CD8-positive, alpha-beta T cell (primary cell): ENCODE measurements at regions of chr12 and their contacts with region 1.

Region 1: DNA sequence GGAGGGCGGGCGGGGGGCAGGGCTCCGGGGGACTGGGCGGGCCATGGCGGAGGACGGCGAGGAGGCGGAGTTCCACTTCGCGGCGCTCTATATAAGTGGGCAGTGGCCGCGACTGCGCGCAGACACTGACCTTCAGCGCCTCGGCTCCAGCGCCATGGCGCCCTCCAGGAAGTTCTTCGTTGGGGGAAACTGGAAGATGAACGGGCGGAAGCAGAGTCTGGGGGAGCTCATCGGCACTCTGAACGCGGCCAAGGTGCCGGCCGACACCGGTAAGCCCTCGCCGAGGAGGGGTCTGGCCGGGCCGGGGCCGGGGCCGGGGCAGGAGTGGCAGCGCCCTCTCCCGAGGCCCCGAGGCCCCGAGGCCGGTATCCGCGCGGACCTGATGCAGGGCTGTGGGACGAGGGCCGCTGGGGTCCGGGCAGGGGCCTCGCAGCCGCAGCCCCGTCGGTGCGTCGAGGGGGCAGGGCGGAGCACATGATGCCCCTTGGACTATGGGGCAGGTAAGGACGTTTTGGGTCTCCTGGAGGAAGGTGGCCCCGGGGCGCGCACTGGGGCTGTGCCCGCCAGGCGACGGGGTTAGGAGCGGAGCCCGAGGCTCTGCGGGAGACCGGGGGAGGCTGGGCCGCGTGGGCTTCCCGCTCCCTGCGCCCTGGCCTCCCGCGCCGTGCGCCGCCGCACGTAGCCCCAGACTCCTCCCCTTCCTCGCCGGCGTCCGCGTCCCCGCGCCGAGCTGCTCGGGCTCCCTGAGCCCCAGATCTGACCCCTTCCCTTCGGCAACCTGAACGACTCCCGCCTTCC is at the start of gene TPI1:
- DNase-seq: peak; percentile 48 to 86 (median 77)
- ATAC-seq: peak; percentile 70
- H3K4me3 ChIP-seq: peak within 1 kb of the TSS; percentile 54 to 64
- H3K4me3 Mint-ChIP-seq: peak within 1 kb of the TSS; percentile 89
- H3K27ac ChIP-seq: peak within 1 kb of the TSS; percentile 53 to 81
- H3K27ac Mint-ChIP-seq: peak within 1 kb of the TSS; percentile 85
- H3K4me1 ChIP-seq: peaks cover 49% of the 10 kb centered on the region
- H3K4me1 Mint-ChIP-seq: peaks cover 57% of the 10 kb centered on the region
- H3K27me3 ChIP-seq: no peaks in the 10 kb centered on the region
- H3K27me3 Mint-ChIP-seq: no peaks in the 10 kb centered on the region
- CTCF ChIP-seq: no peak
- total RNA-seq, gene TPI1: 59.6 to 64.0 TPM

Region 2: DNA sequence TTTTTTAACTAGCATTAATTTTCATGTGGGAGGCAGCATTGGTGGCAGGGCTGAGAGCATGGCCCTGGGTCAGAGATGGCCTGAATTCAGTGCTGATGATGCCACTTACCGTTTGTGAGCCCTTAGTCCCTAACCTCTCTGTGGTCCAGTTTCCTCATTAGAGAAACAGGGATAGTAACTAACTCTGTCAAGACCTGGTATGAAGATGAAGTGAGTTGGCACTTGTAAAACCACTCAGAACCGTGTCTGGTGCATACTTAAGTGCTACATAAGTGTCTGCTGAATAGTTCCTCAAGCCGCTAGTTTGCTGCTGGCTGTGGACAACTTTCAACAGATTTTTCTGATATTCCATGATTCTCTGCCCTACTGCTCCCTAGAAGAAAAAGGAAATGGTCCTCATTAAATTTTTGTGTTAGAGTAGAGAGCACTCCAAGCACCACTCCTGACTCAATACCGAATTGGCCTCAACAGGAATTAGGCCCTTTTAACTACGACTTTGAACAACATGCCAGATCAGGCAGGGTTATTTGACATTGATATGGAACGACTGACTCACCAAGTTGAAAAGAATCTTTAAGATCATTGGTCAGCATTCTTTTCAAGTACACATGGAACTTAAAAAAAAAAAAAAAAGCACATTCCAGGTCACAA is 1172.7 kb before region 1 on chr12:
- CTCF ChIA-PET with region 1: no interaction called
- POLR2A ChIA-PET with region 1: no interaction called
- intact Hi-C with region 1: no loop called
- DNase-seq: no peak
- ATAC-seq: no peak
- H3K4me3 ChIP-seq: no peak overlapping the region
- H3K4me3 Mint-ChIP-seq: no peak overlapping the region
- H3K27ac ChIP-seq: no peak overlapping the region
- H3K27ac Mint-ChIP-seq: no peak overlapping the region
- H3K4me1 ChIP-seq: no peaks in the 10 kb centered on the region
- H3K4me1 Mint-ChIP-seq: no peaks in the 10 kb centered on the region
- H3K27me3 ChIP-seq: peaks cover 0 to 2% of the 10 kb centered on the region in 2 experiments
- H3K27me3 Mint-ChIP-seq: peaks cover 2% of the 10 kb centered on the region
- CTCF ChIP-seq: no peak

Region 3: DNA sequence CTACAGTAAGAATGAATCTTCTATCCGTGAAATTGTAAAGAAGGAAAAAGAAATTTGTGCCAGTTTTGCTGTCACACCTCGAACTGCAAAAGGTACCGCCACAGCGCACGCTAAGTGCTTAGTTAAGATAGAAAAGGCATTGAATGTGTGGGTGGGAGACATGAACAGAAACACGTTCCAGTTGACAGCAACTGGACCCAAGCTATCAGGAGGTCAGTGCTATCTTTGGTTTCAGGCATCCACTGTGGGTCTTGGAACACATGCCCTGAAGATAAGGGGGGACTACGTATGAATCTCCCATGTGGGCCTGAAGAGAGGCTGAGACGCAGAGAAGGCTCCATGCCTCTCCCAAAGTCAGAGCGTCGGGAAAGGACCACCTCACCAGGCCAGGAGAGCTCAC is 321.6 kb before region 1 on chr12:
- CTCF ChIA-PET with region 1: no interaction called
- POLR2A ChIA-PET with region 1: no interaction called
- intact Hi-C with region 1: no loop called
- DNase-seq: no peak
- ATAC-seq: no peak
- H3K4me3 ChIP-seq: no peak overlapping the region
- H3K4me3 Mint-ChIP-seq: no peak overlapping the region
- H3K27ac ChIP-seq: no peak overlapping the region
- H3K27ac Mint-ChIP-seq: no peak overlapping the region
- H3K4me1 ChIP-seq: no peaks in the 10 kb centered on the region
- H3K4me1 Mint-ChIP-seq: peaks cover 10% of the 10 kb centered on the region
- H3K27me3 ChIP-seq: no peaks in the 10 kb centered on the region
- H3K27me3 Mint-ChIP-seq: no peaks in the 10 kb centered on the region
- CTCF ChIP-seq: no peak

Region 4: DNA sequence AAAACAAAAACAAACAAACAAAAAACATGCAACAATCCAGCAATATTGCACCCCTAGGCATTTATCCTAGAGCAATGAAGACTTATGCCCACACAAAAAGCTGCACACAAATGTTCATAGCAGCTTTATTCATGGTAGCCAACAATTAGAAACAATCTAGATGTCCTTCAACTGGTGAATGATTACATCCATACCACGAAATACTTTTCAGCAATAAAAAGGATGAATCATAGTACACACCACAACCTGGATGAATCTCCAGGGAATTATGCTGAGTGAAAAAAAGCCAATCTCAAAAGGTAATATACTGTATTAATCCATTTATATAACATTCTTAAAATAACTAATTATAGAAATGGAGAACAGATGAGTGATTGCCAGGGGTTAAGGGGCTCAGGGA is 60.4 kb before region 1 on chr12:
- CTCF ChIA-PET with region 1: no interaction called
- POLR2A ChIA-PET with region 1: no interaction called
- intact Hi-C with region 1: no loop called
- DNase-seq: no peak
- ATAC-seq: no peak
- H3K4me3 ChIP-seq: no peak overlapping the region
- H3K4me3 Mint-ChIP-seq: no peak overlapping the region
- H3K27ac ChIP-seq: no peak overlapping the region
- H3K27ac Mint-ChIP-seq: no peak overlapping the region
- H3K4me1 ChIP-seq: no peaks in the 10 kb centered on the region
- H3K4me1 Mint-ChIP-seq: no peaks in the 10 kb centered on the region
- H3K27me3 ChIP-seq: no peaks in the 10 kb centered on the region
- H3K27me3 Mint-ChIP-seq: no peaks in the 10 kb centered on the region
- CTCF ChIP-seq: no peak

Region 5: DNA sequence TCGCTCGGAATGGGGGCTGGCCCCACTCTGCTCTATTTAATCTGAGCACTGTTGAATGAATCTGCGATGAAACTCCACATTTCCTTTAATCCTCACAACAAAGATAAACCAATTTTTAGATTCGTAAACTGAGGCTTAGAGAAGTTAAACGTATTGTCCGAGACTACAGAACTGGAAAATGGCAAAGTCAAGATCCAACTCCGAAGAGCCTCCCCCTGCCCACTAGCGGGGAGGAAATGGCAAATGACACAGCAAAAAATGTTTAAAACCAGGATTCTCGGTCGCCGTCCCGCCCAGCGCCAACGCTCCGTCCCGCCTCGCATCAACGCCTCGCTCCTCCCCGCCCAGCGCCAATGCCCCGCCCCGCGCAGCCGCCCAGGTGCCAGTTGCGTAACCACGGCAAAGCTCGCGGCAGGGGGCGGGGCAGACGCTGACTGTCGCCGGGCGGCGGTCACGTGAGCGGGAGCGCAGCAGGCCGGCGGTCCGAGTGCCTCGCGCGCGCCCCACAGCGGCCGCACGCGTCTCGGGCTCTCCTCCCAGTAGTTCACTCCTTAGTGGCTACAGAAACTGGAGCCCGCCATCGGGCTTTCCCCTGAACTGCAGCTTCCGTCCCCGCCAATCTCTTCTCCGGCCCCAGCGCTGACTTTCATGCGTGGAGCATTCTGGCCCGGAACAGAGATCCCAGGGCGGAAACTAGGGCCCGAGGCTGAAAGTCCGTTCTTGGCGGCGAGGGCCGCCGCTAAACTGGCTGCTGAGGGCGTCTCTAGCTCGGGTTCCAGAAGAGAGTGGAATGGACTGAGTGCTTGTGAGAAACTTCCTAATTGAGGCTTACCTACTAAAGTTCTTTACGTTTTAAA is 23.4 kb after region 1 on chr12:
- CTCF ChIA-PET with region 1: interaction called, 81 read pairs
- POLR2A ChIA-PET with region 1: interaction called, 46 read pairs
- intact Hi-C with region 1: loop called in 1 of 2 experiments (anchors 1 kb)
- DNase-seq: peak; percentile 97 to 100 (median 99)
- ATAC-seq: peak; percentile 94
- H3K4me3 ChIP-seq: peak overlapping the region; percentile 64 to 70
- H3K4me3 Mint-ChIP-seq: peak overlapping the region; percentile 80
- H3K27ac ChIP-seq: peak overlapping the region; percentile 64 to 97
- H3K27ac Mint-ChIP-seq: peak overlapping the region; percentile 90
- H3K4me1 ChIP-seq: peaks cover 11% of the 10 kb centered on the region
- H3K4me1 Mint-ChIP-seq: peaks cover 16% of the 10 kb centered on the region
- H3K27me3 ChIP-seq: no peaks in the 10 kb centered on the region
- H3K27me3 Mint-ChIP-seq: no peaks in the 10 kb centered on the region
- CTCF ChIP-seq: peak; percentile 86

Region 6: DNA sequence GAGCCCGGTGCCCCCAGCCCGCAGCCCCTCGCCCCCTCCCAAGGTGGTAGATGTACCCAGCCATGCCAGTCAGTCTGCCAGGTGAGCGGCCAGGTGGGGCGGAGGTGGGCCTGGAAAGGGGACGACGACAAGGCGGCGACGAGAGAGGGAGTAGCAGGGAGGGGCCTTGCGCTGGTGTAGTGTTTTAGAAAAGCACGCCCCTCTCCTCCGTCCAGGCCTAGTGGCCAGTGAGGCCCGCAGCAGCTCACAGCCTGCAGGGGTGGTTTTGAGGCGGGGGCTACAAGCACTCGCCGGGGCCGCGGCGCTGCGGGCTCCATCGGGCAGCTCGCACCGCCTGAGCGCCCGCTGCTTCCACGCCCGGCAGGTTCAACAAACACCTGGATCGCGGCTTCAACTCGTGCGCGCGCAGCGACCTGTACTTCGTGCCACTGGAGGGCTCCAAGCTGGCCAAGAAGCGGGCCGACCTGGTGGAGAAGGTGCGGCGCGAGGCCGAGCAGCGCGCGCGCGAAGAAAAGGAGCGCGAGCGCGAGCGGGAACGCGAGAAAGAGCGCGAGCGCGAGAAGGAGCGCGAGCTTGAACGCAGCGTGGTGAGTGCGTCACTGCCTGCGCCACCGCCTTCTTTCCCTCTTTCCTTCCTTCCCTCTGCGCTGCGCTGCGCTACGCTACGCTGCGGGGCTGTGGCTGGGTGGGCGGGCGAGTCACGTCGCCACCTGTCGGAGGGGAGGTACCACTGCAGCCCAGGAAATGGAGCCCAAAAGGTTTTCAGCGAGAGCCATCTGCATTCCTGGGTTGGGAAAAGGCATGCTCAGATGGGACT is 70.1 kb after region 1 on chr12:
- CTCF ChIA-PET with region 1: interaction called, 75 read pairs
- POLR2A ChIA-PET with region 1: interaction called, 45 read pairs
- intact Hi-C with region 1: loop called in 1 of 2 experiments (anchors 1 kb)
- DNase-seq: peak; percentile 84 to 99 (median 92)
- ATAC-seq: peak; percentile 91
- H3K4me3 ChIP-seq: peak overlapping the region; percentile 60 to 91
- H3K4me3 Mint-ChIP-seq: peak overlapping the region; percentile 83
- H3K27ac ChIP-seq: peak overlapping the region; percentile 89 to 91
- H3K27ac Mint-ChIP-seq: peak overlapping the region; percentile 96
- H3K4me1 ChIP-seq: peaks cover 25% of the 10 kb centered on the region
- H3K4me1 Mint-ChIP-seq: peaks cover 48% of the 10 kb centered on the region
- H3K27me3 ChIP-seq: no peaks in the 10 kb centered on the region
- H3K27me3 Mint-ChIP-seq: no peaks in the 10 kb centered on the region
- CTCF ChIP-seq: peak; percentile 90

Region 7: GRCh38 chr12:7092229-7092985 is 224.8 kb after region 1 on chr12 and contains the start of gene C1R:
- CTCF ChIA-PET with region 1: interaction called, 11 read pairs
- POLR2A ChIA-PET with region 1: no interaction called
- intact Hi-C with region 1: loop called (anchors 1 kb)
- DNase-seq: peak; percentile 36 to 81 (median 72)
- ATAC-seq: peak; percentile 89
- H3K4me3 ChIP-seq: peak within 1 kb of the TSS; percentile 49 to 66
- H3K4me3 Mint-ChIP-seq: peak within 1 kb of the TSS; percentile 88
- H3K27ac ChIP-seq: no peak within 1 kb of the TSS
- H3K27ac Mint-ChIP-seq: peak within 1 kb of the TSS; percentile 29
- H3K4me1 ChIP-seq: peaks cover 14% of the 10 kb centered on the region
- H3K4me1 Mint-ChIP-seq: peaks cover 11% of the 10 kb centered on the region
- H3K27me3 ChIP-seq: no peaks in the 10 kb centered on the region
- H3K27me3 Mint-ChIP-seq: no peaks in the 10 kb centered on the region
- CTCF ChIP-seq: peak; percentile 82
- total RNA-seq, gene C1R: 3.8 TPM

Region 8: GRCh38 chr12:7142056-7142644 is 274.5 kb after region 1 on chr12:
- CTCF ChIA-PET with region 1: no interaction called
- POLR2A ChIA-PET with region 1: no interaction called
- intact Hi-C with region 1: loop called in 1 of 2 experiments (anchors 1 kb)
- DNase-seq: peak; percentile 20 to 68 (median 57)
- ATAC-seq: peak; percentile 90
- H3K4me3 ChIP-seq: no peak overlapping the region
- H3K4me3 Mint-ChIP-seq: no peak overlapping the region
- H3K27ac ChIP-seq: no peak overlapping the region
- H3K27ac Mint-ChIP-seq: no peak overlapping the region
- H3K4me1 ChIP-seq: no peaks in the 10 kb centered on the region
- H3K4me1 Mint-ChIP-seq: no peaks in the 10 kb centered on the region
- H3K27me3 ChIP-seq: no peaks in the 10 kb centered on the region
- H3K27me3 Mint-ChIP-seq: no peaks in the 10 kb centered on the region
- CTCF ChIP-seq: no peak

Region 9: DNA sequence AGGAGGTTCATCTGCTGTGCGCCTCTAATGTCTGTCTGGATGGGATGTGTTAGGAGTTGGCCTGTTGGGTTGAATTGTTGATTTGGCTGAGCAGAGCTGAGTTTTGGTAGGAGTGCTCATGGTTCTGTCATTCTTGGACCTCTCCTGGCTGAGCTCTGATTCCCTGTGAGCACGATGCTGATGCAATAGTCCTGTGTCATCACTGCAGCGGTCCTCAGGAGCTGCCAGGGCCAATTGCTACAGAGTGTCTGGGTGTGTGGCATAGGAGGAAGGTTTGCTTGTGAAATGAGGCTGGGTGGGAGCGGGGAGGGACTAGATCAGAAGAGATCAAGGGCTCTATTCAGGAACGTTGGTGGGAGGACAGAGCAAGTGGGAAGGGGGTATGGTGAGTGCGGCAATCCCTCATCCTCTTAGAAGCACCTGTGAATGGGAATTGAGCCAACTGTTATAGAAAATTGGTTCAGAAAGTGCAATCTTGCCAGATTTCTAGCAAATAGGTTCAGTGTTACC is 343.1 kb after region 1 on chr12:
- CTCF ChIA-PET with region 1: no interaction called
- POLR2A ChIA-PET with region 1: no interaction called
- intact Hi-C with region 1: no loop called
- DNase-seq: no peak
- ATAC-seq: no peak
- H3K4me3 ChIP-seq: no peak overlapping the region
- H3K4me3 Mint-ChIP-seq: no peak overlapping the region
- H3K27ac ChIP-seq: no peak overlapping the region
- H3K27ac Mint-ChIP-seq: no peak overlapping the region
- H3K4me1 ChIP-seq: no peaks in the 10 kb centered on the region
- H3K4me1 Mint-ChIP-seq: no peaks in the 10 kb centered on the region
- H3K27me3 ChIP-seq: no peaks in the 10 kb centered on the region
- H3K27me3 Mint-ChIP-seq: no peaks in the 10 kb centered on the region
- CTCF ChIP-seq: no peak